Common myeloid progenitor, CD34-positive (primary cell): ENCODE measurements at regions of chr5 and their contacts with region 1.

Region 1: DNA sequence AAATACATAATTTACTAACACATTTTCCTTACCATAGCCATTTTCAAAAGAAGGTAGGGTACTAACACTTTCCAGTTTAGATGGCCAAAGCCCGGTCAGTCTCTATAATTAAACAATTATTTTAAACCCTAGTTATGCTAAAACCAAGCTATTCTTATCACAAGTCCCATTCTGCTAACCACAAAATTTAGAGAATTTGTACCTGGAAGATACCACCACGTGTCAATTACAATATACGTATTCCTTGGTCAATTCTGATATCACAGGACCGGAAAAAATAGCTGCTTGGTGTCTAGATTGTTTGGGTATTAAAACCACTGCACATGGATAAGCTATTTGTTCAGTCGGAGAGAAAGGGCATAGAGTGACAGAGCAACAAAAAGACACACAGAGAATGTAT is 18.9 kb upstream of the SKP1 start:
- DNase-seq: no peak
- H3K4me3 ChIP-seq: no peak overlapping the region
- H3K27ac ChIP-seq: no peak overlapping the region
- H3K4me1 ChIP-seq: no peaks in the 10 kb centered on the region
- H3K27me3 ChIP-seq: no peaks in the 10 kb centered on the region

Region 2: GRCh38 chr5:134184155-134185135 is 11.2 kb before region 1 on chr5:
- CTCF ChIA-PET with region 1: interaction called, 14 read pairs
- POLR2A ChIA-PET with region 1: no interaction called
- DNase-seq: peak; percentile 63 to 81 (median 71)
- H3K4me3 ChIP-seq: no peak overlapping the region
- H3K27ac ChIP-seq: no peak overlapping the region
- H3K4me1 ChIP-seq: no peaks in the 10 kb centered on the region
- H3K27me3 ChIP-seq: no peaks in the 10 kb centered on the region

Region 3: DNA sequence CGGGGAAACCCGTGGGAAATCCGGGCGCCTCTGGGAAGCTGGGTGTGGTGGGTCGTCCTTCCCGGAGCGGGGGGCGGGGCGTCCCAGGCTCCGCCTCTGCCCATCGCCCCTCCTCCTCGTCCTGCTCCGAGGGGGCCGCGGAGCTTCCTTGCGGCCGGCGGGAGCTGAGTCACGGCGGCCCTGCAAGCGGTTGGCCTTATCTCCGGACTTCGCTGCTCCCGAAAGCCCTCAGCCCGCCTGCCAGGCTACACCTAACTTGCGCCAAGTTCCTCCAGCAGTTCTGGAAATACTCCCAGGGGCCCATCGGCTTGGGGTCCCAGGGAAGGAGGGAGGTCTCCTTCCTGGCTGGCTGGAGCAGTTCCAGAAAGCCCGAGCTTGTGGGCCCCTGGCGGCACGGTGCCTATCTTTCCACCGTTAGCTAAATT is 270.2 kb after region 1 on chr5:
- CTCF ChIA-PET with region 1: no interaction called
- POLR2A ChIA-PET with region 1: no interaction called
- DNase-seq: peak; percentile 84 to 88 (median 86)
- H3K4me3 ChIP-seq: peak overlapping the region; percentile 18 to 78 (median 64)
- H3K27ac ChIP-seq: peak overlapping the region; percentile 54 to 88
- H3K4me1 ChIP-seq: peaks cover 0 to 50% (median 43%) of the 10 kb centered on the region in 4 experiments
- H3K27me3 ChIP-seq: no peaks in the 10 kb centered on the region

Region 4: DNA sequence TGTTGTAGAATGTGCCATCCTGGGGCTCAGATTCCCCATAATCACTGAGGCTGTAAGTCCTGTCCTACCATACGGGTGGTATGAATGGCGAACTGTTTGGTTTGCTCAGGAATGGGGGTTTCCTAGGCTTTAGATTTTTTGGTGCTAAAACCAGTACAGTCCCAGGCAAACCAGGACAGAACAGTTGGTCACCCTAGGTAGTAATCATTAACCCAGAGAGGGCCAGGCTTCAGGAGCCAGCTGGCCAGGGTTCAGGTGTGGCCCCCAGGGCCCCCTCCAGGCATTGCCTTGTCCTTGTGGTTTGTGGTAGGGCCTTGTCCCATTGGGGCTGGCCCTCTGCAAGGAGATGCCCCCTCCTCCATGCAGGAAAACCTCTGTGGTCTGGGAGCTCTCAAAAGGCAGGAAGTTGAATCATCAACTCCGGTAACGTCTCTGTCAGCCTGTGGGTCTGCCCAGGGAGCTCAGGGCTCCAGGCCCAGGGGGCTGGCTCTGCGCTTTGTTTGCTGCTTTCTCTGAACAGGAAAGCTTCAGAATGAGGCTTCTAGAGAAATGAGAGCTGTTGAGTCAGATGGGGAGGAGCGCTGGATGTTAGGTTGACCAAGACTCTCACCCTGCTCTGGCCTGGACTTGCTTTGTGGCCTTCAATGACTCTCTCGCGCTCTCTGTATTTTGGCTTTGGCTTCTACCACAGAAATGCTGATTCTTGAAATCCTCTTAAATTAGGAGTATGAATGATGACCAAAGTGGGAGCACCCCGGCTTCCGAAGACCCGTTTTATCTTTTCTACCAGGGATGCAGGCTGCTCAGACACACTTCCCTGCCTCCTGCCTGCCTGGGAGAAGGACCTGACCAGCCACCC is 307.7 kb after region 1 on chr5:
- CTCF ChIA-PET with region 1: no interaction called
- POLR2A ChIA-PET with region 1: no interaction called
- DNase-seq: peak; percentile 84 to 93 (median 90)
- H3K4me3 ChIP-seq: peak overlapping the region in 3 of 7 experiments; percentile 39 to 52 (median 39)
- H3K27ac ChIP-seq: peak overlapping the region; percentile 74 to 88
- H3K4me1 ChIP-seq: peaks cover 12 to 54% (median 53%) of the 10 kb centered on the region in 4 experiments
- H3K27me3 ChIP-seq: no peaks in the 10 kb centered on the region

Region 5: GRCh38 chr5:134568761-134569695 is 373.4 kb after region 1 on chr5:
- CTCF ChIA-PET with region 1: no interaction called
- POLR2A ChIA-PET with region 1: no interaction called
- DNase-seq: no peak
- H3K4me3 ChIP-seq: no peak overlapping the region
- H3K27ac ChIP-seq: no peak overlapping the region
- H3K4me1 ChIP-seq: no peaks in the 10 kb centered on the region
- H3K27me3 ChIP-seq: no peaks in the 10 kb centered on the region